ENCODE measurements at regions of chr14 and their contacts with region 1.

Region 1: DNA sequence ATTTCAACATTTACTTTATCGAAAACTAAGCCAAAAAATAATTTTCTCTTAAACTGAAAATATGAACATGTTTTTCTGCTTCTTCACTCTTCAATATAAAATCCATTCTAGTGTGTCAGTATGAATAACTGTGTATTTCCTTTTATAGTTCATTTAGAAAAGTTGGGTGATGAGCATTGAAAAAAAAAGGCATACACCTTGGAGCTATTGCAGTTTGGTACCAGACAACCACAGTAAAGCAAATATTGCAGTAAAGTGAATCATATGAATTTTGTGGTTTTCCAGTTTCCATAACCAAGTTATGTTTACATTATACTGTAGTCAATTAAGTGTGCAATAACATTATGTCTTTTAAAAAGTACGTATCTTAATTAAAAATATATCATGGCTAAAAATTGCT is 195.0 kb upstream of the FOXG1 start:
- DNase-seq: no peak
- H3K4me3 ChIP-seq: no peak overlapping the region
- H3K27ac ChIP-seq: no peak overlapping the region
- H3K4me1 ChIP-seq: no peaks in the 10 kb centered on the region
- H3K27me3 ChIP-seq: no peaks in the 10 kb centered on the region
- CTCF ChIP-seq: no peak
- POLR2A ChIP-seq: no peak

Region 2: GRCh38 chr14:28584951-28585350 is 13.3 kb after region 1 on chr14:
- intact Hi-C with region 1: loop called (anchors 1 kb)
- DNase-seq: no peak
- H3K4me3 ChIP-seq: no peak overlapping the region
- H3K27ac ChIP-seq: no peak overlapping the region
- H3K4me1 ChIP-seq: no peaks in the 10 kb centered on the region
- H3K27me3 ChIP-seq: no peaks in the 10 kb centered on the region
- CTCF ChIP-seq: no peak
- POLR2A ChIP-seq: no peak

Measured in breast epithelium (tissue), 4 donors.